Mammary epithelial cell (primary cell): ENCODE measurements at regions of chr13 and their contacts with region 1.

Region 1: DNA sequence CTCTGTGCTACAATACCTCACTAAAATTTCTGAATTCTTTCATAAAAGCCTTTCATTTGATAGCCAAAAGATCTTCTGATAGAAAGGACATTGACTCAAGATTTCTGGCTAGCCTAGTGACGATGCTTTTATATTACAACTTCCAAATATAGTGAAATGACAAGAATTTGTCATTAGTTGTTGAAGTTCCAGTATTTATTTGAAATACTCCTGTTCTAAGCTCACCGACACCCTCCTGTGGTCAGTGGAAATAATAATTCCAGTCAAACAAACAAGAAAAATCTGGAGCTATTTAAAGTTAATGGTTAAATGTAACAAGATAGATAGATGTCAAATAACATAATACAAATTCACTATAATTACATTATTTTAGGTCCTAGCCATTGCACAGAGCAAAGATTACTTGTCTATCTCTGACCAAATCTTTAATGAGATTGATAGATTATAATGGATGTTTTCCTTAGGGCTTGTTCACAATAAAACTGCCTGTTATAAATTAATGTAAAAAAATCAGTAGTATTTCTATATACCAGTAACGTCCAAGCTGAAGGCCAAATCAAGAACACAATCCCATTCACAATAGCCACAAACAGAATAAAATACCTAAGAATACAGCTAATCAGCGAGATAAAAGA is 195.5 kb downstream of the RGCC start:
- DNase-seq: peak; percentile 26
- H3K4me3 ChIP-seq: no peak overlapping the region
- H3K27ac ChIP-seq: no peak overlapping the region
- H3K4me1 ChIP-seq: peaks cover 9% of the 10 kb centered on the region
- H3K27me3 ChIP-seq: no peaks in the 10 kb centered on the region
- CTCF ChIP-seq: peak; percentile 63 to 65

Region 2: DNA sequence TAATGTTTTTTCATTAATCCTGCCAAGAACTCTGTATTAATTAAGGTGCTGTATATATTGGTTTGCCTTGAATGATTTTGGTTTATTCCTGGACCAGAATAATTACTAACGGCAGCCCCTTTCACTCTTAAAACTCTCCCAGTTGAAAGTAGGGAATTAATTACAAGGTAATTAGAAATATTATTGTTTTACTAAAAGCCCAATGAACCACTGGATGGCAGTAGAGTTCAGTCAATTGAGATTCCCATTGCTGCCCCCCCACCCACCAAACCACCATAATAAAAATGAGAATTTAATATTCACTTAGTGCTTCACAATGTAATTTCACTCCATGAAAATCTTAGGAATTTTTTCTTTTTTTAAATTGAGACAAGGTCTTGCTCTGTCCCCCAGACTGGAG is 577.8 kb before region 1 on chr13:
- CTCF ChIA-PET with region 1: no interaction called
- dilution Hi-C with region 1: no loop called
- in situ Hi-C with region 1: no loop called
- intact Hi-C with region 1: loop called (anchors 5 kb)
- DNase-seq: no peak
- H3K4me3 ChIP-seq: no peak overlapping the region
- H3K27ac ChIP-seq: no peak overlapping the region
- H3K4me1 ChIP-seq: no peaks in the 10 kb centered on the region
- H3K27me3 ChIP-seq: no peaks in the 10 kb centered on the region
- CTCF ChIP-seq: peak; percentile 38 to 52

Region 3: GRCh38 chr13:41384755-41385503 is 267.9 kb before region 1 on chr13:
- CTCF ChIA-PET with region 1: no interaction called
- dilution Hi-C with region 1: no loop called
- in situ Hi-C with region 1: no loop called
- intact Hi-C with region 1: loop called (anchors 2 kb)
- DNase-seq: no peak
- H3K4me3 ChIP-seq: no peak overlapping the region
- H3K27ac ChIP-seq: no peak overlapping the region
- H3K4me1 ChIP-seq: no peaks in the 10 kb centered on the region
- H3K27me3 ChIP-seq: no peaks in the 10 kb centered on the region
- CTCF ChIP-seq: peak; percentile 35 to 43

Region 4: GRCh38 chr13:41411522-41411921 is 241.3 kb before region 1 on chr13:
- CTCF ChIA-PET with region 1: interaction called, 7 read pairs
- dilution Hi-C with region 1: no loop called
- in situ Hi-C with region 1: loop called (anchors 10 to 25 kb)
- intact Hi-C with region 1: loop called (anchors 1 kb)
- DNase-seq: peak; percentile 42
- H3K4me3 ChIP-seq: no peak overlapping the region
- H3K27ac ChIP-seq: no peak overlapping the region
- H3K4me1 ChIP-seq: peaks cover 12% of the 10 kb centered on the region
- H3K27me3 ChIP-seq: no peaks in the 10 kb centered on the region
- CTCF ChIP-seq: peak; percentile 12 to 57

Region 5: DNA sequence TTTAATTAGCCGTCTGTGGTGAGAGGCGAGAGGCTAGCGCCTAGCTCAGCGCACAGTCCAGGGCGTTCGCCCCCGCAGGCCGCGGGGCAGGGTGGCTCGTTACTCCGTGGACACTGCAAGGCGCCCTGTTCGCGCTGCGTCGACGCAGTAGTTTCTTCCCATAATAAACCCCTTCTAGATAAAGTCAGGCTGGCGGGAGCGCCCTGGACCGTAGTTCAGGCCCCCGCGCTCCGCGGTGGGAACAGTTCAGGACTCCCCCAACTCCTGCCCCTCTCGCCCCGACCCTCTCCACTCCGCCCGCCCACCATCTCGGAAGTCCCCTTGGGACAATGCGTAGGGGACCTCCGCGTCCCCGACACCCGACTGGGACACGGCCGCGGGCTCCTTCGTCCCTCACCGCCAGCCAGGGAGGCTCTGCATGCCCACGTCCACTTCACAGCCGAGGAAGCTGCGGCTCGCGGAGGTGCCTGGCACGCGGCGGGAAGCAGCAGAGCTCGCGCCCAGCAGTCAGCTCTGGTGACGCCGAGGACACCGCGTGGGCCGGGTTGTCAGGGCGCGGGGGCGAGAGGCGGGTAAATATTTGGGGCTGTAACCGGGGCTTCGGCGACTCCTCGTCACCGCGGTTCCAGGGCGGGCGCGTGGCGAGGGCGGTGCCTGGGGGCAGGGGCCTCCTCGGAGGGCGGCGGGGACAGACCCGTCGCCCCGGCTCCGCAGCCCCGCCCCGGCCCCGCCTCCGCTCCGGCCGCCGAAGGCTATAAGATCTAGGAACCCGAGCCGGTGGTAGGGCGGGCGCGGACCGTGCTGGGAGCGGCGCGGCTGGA is 195.9 kb before region 1 on chr13 and contains the start of gene RGCC:
- CTCF ChIA-PET with region 1: interaction called, 25 read pairs
- dilution Hi-C with region 1: no loop called
- in situ Hi-C with region 1: no loop called
- intact Hi-C with region 1: loop called (anchors 1 kb)
- DNase-seq: peak; percentile 60
- H3K4me3 ChIP-seq: peak within 1 kb of the TSS; percentile 55 to 64 (median 58)
- H3K27ac ChIP-seq: no peak within 1 kb of the TSS
- H3K4me1 ChIP-seq: peaks cover 26% of the 10 kb centered on the region
- H3K27me3 ChIP-seq: no peaks in the 10 kb centered on the region
- CTCF ChIP-seq: no peak
- total RNA-seq, gene RGCC: 1.4 to 8.0 TPM

Region 6: DNA sequence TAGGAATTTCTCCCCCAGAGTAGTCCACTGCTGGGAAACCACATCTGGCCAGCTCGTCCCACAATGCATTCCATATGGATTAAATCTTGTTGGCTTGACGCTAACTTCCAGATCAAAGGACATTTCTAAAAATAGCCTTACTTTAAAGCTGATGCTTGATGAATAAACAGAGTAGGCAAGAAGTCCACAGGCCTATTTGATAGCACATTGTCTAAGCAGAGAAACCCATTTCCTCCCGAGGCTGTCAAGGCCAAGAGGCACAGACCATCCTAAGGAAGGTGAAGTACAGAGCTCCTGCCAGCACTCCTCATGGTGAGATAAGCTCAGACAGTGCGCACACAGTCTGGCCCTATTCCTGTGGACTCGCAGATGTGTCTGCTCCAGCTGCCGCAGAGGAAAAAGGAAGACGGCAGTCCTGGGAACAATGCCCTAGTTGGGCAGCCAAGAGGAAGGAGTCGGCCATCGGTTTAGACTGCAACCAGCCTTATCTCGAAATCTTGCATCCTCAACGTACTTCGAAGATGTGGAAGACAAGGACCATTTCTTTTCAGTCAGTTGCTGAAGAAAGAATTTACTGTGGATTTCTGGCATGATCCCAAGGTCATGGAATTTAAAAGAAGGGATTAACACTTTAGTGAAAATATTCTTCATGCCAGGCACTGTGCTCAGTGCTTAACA is 38.7 kb before region 1 on chr13:
- CTCF ChIA-PET with region 1: no interaction called
- dilution Hi-C with region 1: no loop called
- in situ Hi-C with region 1: no loop called
- intact Hi-C with region 1: loop called (anchors 5 kb)
- DNase-seq: peak; percentile 51
- H3K4me3 ChIP-seq: no peak overlapping the region
- H3K27ac ChIP-seq: peak overlapping the region; percentile 40
- H3K4me1 ChIP-seq: peaks cover 46% of the 10 kb centered on the region
- H3K27me3 ChIP-seq: no peaks in the 10 kb centered on the region
- CTCF ChIP-seq: no peak

Region 7: DNA sequence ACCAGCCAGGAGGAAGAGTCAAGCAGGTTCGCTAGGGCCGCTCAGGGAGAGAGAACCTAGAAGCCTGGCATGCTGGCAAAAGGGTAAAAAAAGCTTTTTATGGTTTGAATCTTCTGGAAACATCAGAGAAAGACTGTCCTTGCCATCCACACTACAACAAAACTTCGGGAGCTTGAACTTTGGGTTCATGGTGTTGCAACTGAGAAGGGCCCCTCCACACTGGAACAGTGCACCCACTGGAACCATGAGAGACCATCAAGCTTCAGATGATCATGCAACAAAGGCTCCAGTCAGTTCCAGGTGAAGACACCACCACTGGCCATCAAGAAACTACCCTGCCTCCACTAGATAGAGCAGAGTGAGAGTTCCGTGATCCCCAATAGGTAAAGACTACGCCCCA is 25.4 kb before region 1 on chr13:
- CTCF ChIA-PET with region 1: no interaction called
- dilution Hi-C with region 1: no loop called
- in situ Hi-C with region 1: no loop called
- intact Hi-C with region 1: no loop called
- DNase-seq: no peak
- H3K4me3 ChIP-seq: no peak overlapping the region
- H3K27ac ChIP-seq: no peak overlapping the region
- H3K4me1 ChIP-seq: peaks cover 6% of the 10 kb centered on the region
- H3K27me3 ChIP-seq: no peaks in the 10 kb centered on the region
- CTCF ChIP-seq: no peak